Activated naive CD4-positive, alpha-beta T cell treated with anti-CD3 and anti-CD28 coated beads for 36 hours (primary cell): ENCODE measurements at regions of chr3 and their contacts with region 1.

Region 1: GRCh38 chr3:184561061-184561912 is at the start of gene EPHB3:
- DNase-seq: peak; percentile 98
- H3K4me3 Mint-ChIP-seq: peak within 1 kb of the TSS; percentile 62
- H3K27ac Mint-ChIP-seq: no peak within 1 kb of the TSS
- H3K4me1 Mint-ChIP-seq: peaks cover 35% of the 10 kb centered on the region
- H3K27me3 Mint-ChIP-seq: peaks cover 33% of the 10 kb centered on the region
- total RNA-seq, gene EPHB3: not detected

Region 2: GRCh38 chr3:184711493-184712247 is 150.4 kb after region 1 on chr3 and contains the start of gene MAGEF1:
- CTCF ChIA-PET with region 1: interaction called, 3 read pairs
- intact Hi-C with region 1: loop called (anchors 1 kb)
- DNase-seq: peak; percentile 81
- H3K4me3 Mint-ChIP-seq: peak within 1 kb of the TSS; percentile 95
- H3K27ac Mint-ChIP-seq: peak within 1 kb of the TSS; percentile 90
- H3K4me1 Mint-ChIP-seq: peaks cover 36% of the 10 kb centered on the region
- H3K27me3 Mint-ChIP-seq: no peaks in the 10 kb centered on the region
- total RNA-seq, gene MAGEF1: 17.4 to 18.1 TPM

Region 3: GRCh38 chr3:184748219-184749135 is 187.2 kb after region 1 on chr3:
- CTCF ChIA-PET with region 1: interaction called, 7 read pairs
- intact Hi-C with region 1: loop called (anchors 1 kb)
- DNase-seq: peak; percentile 31
- H3K4me3 Mint-ChIP-seq: no peak overlapping the region
- H3K27ac Mint-ChIP-seq: no peak overlapping the region
- H3K4me1 Mint-ChIP-seq: peaks cover 7% of the 10 kb centered on the region
- H3K27me3 Mint-ChIP-seq: no peaks in the 10 kb centered on the region

Region 4: DNA sequence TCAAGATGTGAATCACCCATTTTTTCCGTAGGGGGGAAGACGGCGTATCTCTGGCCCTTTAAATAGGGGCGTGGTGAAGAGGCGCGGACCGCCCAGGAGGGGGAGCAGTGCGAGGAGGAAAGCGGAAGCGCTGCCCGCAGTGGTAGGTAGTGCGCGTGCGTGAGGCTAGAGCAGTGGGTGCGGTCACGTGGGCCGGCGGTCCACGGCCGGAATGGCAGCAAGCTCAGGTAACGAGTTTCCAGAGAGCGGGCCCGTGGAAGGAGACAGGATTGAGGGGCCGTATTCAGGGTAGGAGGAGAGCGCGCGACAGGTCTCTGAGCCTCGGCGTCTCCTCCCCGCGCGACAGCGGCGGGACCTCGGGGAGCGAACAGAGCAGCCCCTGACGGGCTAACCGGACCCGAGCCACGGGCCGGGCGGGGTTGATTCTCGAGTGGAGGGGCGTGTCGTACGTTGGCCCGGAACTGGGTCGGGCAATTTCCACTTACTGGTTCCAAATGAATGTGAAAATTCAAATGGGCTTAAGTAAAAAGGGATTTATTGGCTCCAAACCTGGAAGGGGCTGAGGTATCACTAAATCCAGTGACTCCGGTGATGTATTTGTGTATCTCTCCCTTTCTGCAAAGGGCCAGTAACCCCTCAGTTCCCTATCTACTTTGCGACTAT is 250.8 kb after region 1 on chr3 and contains the start of gene VPS8:
- CTCF ChIA-PET with region 1: interaction called, 8 read pairs
- intact Hi-C with region 1: loop called (anchors 1 kb)
- DNase-seq: peak; percentile 97
- H3K4me3 Mint-ChIP-seq: peak within 1 kb of the TSS; percentile 92
- H3K27ac Mint-ChIP-seq: peak within 1 kb of the TSS; percentile 85
- H3K4me1 Mint-ChIP-seq: peaks cover 48% of the 10 kb centered on the region
- H3K27me3 Mint-ChIP-seq: no peaks in the 10 kb centered on the region
- total RNA-seq, gene VPS8: 32.7 to 33.7 TPM

Region 5: DNA sequence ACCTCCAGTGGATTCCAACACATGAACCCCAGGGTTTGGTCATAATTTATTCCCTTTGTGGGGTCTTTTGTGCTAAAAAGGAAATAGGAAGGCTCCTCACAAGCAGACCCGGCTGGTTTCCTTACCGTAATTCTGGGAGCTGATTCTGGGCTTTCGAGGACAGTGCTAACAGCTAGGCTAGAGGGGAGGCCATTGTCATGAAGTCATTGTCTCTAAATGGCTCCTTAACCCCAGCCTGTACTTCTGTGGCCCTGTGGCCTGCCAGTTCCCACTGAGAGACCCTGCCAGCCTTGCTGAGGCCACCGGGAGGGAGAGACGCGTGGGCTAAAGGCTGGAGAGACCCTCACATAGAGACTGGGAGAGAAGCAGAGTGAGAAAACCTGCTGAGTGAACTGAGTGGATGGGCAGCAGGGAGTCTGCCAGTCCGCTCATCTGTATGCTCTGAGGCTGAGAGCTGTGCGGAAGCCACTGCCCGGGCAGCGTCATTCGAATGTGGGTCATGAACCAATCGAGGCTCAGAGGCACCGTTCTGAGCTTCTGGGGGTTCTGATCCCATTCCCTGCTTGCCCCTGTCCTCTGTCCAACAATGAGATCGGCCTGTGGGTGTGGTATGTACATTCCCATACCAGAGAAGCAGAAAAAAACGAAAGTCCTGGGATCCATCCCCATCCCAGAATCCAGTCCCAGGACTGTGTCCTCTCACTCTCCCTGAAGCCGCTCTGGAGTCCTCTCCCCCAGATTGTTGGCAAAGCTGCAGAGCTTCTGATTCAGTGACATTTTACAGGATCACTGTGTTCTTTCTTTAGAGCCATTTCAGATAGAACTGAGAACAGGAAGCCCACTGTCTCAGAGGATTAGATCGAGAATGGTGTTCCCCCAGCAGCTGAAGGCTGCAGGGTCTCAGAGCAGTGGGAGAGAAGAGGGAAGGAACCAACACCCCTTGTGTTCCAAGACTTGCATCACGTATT is 1822.0 kb after region 1 on chr3:
- CTCF ChIA-PET with region 1: no interaction called
- intact Hi-C with region 1: no loop called
- DNase-seq: no peak
- H3K4me3 Mint-ChIP-seq: no peak overlapping the region
- H3K27ac Mint-ChIP-seq: no peak overlapping the region
- H3K4me1 Mint-ChIP-seq: peaks cover 6% of the 10 kb centered on the region
- H3K27me3 Mint-ChIP-seq: peaks cover 3% of the 10 kb centered on the region